Activated naive CD4-positive, alpha-beta T cell treated with anti-CD3 and anti-CD28 coated beads for 36 hours (primary cell): ENCODE measurements at regions of chr3 and their contacts with region 1.

Region 1: DNA sequence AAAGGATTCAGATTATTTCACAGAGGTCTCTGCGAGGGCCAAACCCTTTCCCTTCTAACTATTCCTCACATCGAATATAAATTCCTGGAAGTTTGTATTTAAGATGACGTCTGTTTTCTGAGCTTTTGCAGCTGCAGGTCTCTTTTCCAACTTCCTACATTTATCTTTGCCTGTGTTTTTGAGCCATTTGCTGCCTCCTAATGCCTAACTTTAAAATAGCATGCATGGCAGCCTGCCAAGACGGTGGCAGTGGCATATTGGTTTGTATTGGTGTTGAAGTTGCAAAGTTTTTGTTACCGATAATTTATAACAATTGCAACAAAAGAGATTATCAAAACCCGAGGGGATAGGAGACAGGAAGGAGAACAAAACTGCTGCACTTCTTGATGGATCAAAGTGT is 187.1 kb upstream of the DNAJC19 start:
- DNase-seq: peak; percentile 60
- H3K4me3 Mint-ChIP-seq: no peak overlapping the region
- H3K27ac Mint-ChIP-seq: no peak overlapping the region
- H3K4me1 Mint-ChIP-seq: no peaks in the 10 kb centered on the region
- H3K27me3 Mint-ChIP-seq: peaks cover 2% of the 10 kb centered on the region

Region 2: GRCh38 chr3:180633722-180634121 is 542.9 kb before region 1 on chr3:
- CTCF ChIA-PET with region 1: no interaction called
- intact Hi-C with region 1: loop called (anchors 10 kb)
- DNase-seq: no peak
- H3K4me3 Mint-ChIP-seq: no peak overlapping the region
- H3K27ac Mint-ChIP-seq: no peak overlapping the region
- H3K4me1 Mint-ChIP-seq: peaks cover 15% of the 10 kb centered on the region
- H3K27me3 Mint-ChIP-seq: peaks cover 41% of the 10 kb centered on the region

Region 3: GRCh38 chr3:180690061-180690460 is 486.5 kb before region 1 on chr3:
- CTCF ChIA-PET with region 1: no interaction called
- intact Hi-C with region 1: loop called (anchors 10 kb)
- DNase-seq: no peak
- H3K4me3 Mint-ChIP-seq: no peak overlapping the region
- H3K27ac Mint-ChIP-seq: no peak overlapping the region
- H3K4me1 Mint-ChIP-seq: no peaks in the 10 kb centered on the region
- H3K27me3 Mint-ChIP-seq: peaks cover 18% of the 10 kb centered on the region

Region 4: GRCh38 chr3:180802837-180803236 is 373.8 kb before region 1 on chr3:
- CTCF ChIA-PET with region 1: no interaction called
- intact Hi-C with region 1: loop called (anchors 1 kb)
- DNase-seq: no peak
- H3K4me3 Mint-ChIP-seq: no peak overlapping the region
- H3K27ac Mint-ChIP-seq: no peak overlapping the region
- H3K4me1 Mint-ChIP-seq: no peaks in the 10 kb centered on the region
- H3K27me3 Mint-ChIP-seq: peaks cover 13% of the 10 kb centered on the region

Region 5: GRCh38 chr3:181103605-181104004 is 73.0 kb before region 1 on chr3:
- CTCF ChIA-PET with region 1: interaction called, 3 read pairs
- intact Hi-C with region 1: loop called (anchors 1 kb)
- DNase-seq: peak; percentile 29
- H3K4me3 Mint-ChIP-seq: no peak overlapping the region
- H3K27ac Mint-ChIP-seq: no peak overlapping the region
- H3K4me1 Mint-ChIP-seq: no peaks in the 10 kb centered on the region
- H3K27me3 Mint-ChIP-seq: no peaks in the 10 kb centered on the region

Region 6: DNA sequence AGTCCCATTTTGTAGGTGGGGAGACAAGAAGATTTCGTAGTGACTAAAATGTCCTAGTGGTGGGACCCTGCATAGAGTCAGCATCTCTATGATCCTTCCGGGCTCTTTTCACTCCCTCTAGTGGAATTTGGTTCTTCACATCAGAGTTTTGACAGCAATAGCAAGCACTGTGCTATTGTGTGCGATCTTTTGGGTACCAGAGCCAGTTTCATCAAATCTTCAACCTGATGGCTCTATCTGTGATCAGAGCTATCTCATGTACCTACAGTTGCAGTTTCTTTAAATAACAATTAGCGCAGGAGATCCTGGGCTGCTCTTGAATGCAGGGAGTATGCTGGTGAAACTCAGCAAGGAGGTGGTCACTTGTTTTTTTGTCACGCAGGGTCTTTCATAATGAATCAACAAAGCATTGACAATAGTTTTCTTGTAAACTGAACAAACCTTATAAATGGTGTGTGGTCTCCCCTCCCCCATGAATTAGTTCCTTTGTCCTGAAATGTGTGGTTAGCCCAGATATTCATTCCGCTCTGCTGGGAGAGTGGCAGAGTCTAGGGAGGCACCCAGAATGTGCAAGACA is 277.9 kb after region 1 on chr3:
- CTCF ChIA-PET with region 1: no interaction called
- intact Hi-C with region 1: no loop called
- DNase-seq: no peak
- H3K4me3 Mint-ChIP-seq: no peak overlapping the region
- H3K27ac Mint-ChIP-seq: no peak overlapping the region
- H3K4me1 Mint-ChIP-seq: no peaks in the 10 kb centered on the region
- H3K27me3 Mint-ChIP-seq: no peaks in the 10 kb centered on the region

Region 7: DNA sequence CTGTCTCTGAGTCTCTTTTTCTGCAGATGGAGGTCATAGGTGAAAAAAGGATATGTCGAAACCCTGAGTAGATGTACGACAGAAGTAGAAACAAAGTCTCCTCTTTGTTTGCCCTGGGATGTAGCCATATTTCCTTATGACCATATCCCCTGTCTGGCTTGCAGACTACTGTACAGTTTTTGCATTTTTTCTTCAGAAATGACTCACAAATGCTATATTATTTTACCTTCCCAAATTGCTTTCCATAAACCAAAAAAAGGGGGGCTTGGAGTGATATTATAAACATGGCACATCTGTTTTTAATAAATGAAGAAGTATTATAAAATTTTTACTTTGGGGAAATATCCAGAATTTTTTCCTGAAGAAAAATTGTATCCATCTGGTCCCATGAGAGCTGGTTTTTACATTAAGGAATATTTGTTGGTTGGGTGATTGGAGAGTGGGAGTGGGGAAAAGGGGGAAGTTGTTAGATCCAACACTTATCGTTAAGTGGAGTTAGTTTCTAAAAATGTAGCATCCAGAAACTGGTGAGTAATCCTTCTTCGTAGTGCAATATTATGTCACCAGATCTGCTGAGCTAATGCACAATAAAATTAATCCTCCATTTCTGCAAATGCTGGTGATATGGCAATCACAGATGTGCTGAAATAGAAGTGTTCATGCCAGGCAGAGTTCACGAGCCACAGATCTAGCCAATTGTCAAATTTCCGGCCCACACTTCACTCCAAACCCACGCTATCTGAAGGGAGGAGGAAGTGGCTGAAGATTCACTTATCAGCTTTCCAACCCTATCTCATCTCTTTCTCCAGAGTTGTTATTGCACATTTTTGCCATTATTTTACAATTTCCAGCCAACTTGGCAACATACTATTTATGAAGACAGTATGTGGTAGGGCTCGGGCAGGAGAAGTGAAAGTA is 1303.1 kb after region 1 on chr3:
- CTCF ChIA-PET with region 1: no interaction called
- intact Hi-C with region 1: no loop called
- DNase-seq: no peak
- H3K4me3 Mint-ChIP-seq: no peak overlapping the region
- H3K27ac Mint-ChIP-seq: no peak overlapping the region
- H3K4me1 Mint-ChIP-seq: no peaks in the 10 kb centered on the region
- H3K27me3 Mint-ChIP-seq: no peaks in the 10 kb centered on the region